ENCODE measurements at regions of chr7 and their contacts with region 1.

Region 1: DNA sequence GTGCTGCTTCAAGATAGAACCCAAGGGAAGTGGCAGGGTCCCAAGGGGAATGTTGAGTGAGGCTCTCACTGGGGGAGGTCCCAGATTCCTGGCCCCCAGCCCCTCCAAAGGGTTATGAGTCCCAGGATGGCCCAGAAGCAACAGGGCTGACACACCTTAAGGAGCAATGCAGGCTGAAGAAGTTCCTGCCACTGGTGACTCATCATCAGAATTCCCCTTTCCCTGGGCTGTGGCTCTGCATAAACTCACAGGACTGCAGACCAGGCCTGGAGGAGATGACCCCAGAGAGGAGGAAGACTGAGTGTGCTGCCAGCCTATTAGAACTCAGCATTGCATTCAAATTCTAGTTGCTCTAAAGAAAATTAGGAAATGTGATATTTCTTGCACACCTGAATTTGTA is 126.7 kb downstream of the DPP6 start:
- DNase-seq: no peak
- H3K4me3 ChIP-seq: no peak overlapping the region
- H3K27ac ChIP-seq: no peak overlapping the region
- H3K4me1 ChIP-seq: no peaks in the 10 kb centered on the region
- H3K27me3 ChIP-seq: peaks cover 44% of the 10 kb centered on the region
- CTCF ChIP-seq: no peak

Region 2: DNA sequence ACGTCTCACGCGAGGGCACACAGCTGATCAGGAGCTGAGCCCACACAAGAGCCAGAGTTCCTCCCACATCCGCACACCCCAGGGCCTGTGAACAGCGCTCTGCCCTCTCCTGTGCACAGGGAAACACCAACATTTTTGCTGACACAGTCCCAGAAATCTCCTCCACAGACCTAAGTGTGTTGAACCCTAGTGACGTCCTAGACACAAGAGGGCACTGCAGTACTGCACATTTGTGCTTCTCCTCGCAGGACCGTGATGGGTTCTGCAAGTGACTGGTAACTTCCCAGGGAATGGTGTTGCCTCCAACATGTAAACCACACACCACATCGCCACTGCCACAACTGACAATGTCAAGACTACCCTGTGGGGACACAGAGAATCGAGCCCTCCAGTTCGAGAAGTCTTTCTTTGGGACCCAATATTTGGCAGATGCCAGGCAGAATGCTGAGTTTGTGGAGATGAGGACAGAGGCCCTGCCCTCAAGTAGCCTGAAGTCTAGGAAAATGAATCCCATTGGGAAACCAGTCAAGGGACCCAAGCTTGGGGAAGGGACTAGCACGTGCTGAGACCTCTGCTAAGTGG is 653.8 kb after region 1 on chr7:
- CTCF ChIA-PET with region 1: no interaction called
- POLR2A ChIA-PET with region 1: interaction called, 29 read pairs
- intact Hi-C with region 1: no loop called
- DNase-seq: no peak
- H3K4me3 ChIP-seq: no peak overlapping the region
- H3K27ac ChIP-seq: no peak overlapping the region
- H3K4me1 ChIP-seq: no peaks in the 10 kb centered on the region
- H3K27me3 ChIP-seq: peaks cover 95% of the 10 kb centered on the region
- CTCF ChIP-seq: peak; percentile 20; the same call in 1 of the 2 replicates

Measured in PC-9 (cell line).